ENCODE measurements at regions of chr6 and their contacts with region 1.

Region 1: DNA sequence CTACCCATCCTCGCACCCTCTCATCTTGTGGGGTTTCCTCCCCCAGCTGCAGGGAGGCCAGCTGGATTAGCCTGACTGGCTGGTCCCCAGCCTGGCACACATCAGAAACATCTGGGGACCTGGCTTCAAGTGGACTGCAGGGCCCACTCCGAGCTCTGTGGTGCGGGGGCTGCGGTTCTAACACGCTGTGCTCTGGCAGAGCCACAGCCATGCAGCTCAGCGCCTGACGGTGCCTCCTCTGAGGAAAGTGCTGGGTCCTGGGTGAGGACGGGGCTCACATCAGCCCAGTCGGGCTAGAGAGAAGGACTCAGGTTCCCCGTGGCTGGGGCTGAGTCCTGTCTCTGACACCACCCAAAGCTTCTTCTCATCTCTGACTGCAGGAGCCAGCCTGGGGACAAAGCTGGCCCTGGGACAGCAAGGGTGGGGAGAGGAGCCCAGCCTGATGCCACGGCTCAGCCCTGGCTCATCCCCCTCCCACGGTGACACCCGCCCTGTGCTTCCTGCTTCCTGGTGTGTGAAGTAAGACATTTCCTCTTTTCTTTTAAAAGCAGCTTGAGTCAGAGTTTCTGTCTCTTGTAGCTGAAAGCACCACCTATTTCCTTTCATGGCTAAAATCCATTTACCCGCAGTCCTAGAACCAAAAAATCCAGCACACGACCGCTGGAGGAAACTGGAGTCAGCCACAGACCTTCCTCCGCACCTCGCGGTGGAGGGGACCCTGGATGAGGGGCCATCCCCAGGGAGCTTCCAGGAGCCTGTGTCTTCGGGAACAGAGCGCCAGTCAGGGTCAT is 127.4 kb upstream of the AFDN start:
- DNase-seq: peak; percentile 97
- H3K4me3 ChIP-seq: peak overlapping the region; percentile 19
- H3K27ac ChIP-seq: peak overlapping the region; percentile 88
- H3K4me1 ChIP-seq: peaks cover 37% of the 10 kb centered on the region
- H3K27me3 ChIP-seq: no peaks in the 10 kb centered on the region
- CTCF ChIP-seq: no peak

Region 2: DNA sequence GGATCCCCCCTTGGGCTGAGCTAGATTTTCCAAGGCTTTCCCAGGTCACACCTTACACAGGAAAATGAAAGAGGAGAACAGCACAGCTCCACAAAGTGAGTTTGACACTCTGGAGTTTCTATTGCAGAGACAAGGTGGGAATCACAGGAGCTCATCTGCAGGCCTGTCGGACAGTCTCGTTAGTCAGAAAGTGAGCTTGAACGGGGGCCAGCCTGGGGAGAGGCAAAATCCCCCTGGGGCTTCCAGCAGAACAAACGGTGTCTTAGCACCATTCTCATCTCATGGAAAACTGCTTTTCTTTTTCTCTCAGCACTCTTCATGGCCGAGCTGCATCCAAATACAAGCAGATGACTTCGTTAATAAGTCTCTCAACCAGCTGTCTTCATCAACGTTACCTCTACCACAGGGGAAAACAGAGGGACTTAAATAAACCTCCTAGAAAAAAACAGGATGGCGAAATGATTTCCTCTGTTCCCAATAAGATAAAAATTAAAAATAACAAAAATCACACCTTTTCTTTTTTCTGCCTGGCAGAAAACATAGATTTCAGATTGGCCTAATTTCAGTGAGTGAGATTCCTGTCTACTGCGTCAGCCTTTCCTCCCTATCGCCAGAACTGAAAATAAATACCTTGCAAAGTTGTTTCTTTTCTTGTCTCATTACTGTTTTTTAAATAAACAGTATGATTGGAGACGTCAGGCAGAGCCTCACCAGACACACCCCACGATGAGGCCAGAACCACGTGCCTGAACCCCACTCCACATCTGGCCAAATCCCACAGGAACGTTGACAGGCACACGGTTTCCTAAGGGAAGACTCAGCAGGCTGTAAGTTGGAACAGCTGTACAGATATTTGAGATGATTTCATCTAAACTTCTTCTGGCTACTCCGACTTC is 155.5 kb before region 1 on chr6:
- CTCF ChIA-PET with region 1: no interaction called
- POLR2A ChIA-PET with region 1: no interaction called
- intact Hi-C with region 1: no loop called
- DNase-seq: no peak
- H3K4me3 ChIP-seq: no peak overlapping the region
- H3K27ac ChIP-seq: no peak overlapping the region
- H3K4me1 ChIP-seq: no peaks in the 10 kb centered on the region
- H3K27me3 ChIP-seq: no peaks in the 10 kb centered on the region
- CTCF ChIP-seq: no peak

Region 3: GRCh38 chr6:167678102-167679101 is 20.9 kb before region 1 on chr6:
- CTCF ChIA-PET with region 1: no interaction called
- POLR2A ChIA-PET with region 1: no interaction called
- intact Hi-C with region 1: loop called (anchors 2 kb)
- DNase-seq: peak; percentile 64
- H3K4me3 ChIP-seq: peak overlapping the region; percentile 54
- H3K27ac ChIP-seq: no peak overlapping the region
- H3K4me1 ChIP-seq: peaks cover 17% of the 10 kb centered on the region
- H3K27me3 ChIP-seq: no peaks in the 10 kb centered on the region
- CTCF ChIP-seq: no peak

Region 4: GRCh38 chr6:167782698-167783517 is 83.6 kb after region 1 on chr6:
- CTCF ChIA-PET with region 1: no interaction called
- POLR2A ChIA-PET with region 1: no interaction called
- intact Hi-C with region 1: loop called (anchors 2 kb)
- DNase-seq: peak; percentile 71
- H3K4me3 ChIP-seq: no peak overlapping the region
- H3K27ac ChIP-seq: peak overlapping the region; percentile 53
- H3K4me1 ChIP-seq: peaks cover 35% of the 10 kb centered on the region
- H3K27me3 ChIP-seq: no peaks in the 10 kb centered on the region
- CTCF ChIP-seq: no peak

Region 5: GRCh38 chr6:167987396-167988153 is 288.2 kb after region 1 on chr6:
- CTCF ChIA-PET with region 1: no interaction called
- POLR2A ChIA-PET with region 1: no interaction called
- intact Hi-C with region 1: no loop called
- DNase-seq: no peak
- H3K4me3 ChIP-seq: no peak overlapping the region
- H3K27ac ChIP-seq: no peak overlapping the region
- H3K4me1 ChIP-seq: no peaks in the 10 kb centered on the region
- H3K27me3 ChIP-seq: no peaks in the 10 kb centered on the region
- CTCF ChIP-seq: no peak

Measured in A673 (cell line).